ENCODE measurements at regions of chr2 and their contacts with region 1.

Region 1: GRCh38 chr2:48946449-48947048 is 191.0 kb upstream of the LHCGR start:
- DNase-seq: peak; percentile 21
- H3K4me3 ChIP-seq: no peak overlapping the region
- H3K27ac ChIP-seq: no peak overlapping the region
- H3K27me3 ChIP-seq: no peaks in the 10 kb centered on the region
- CTCF ChIP-seq: peak; percentile 81

Region 2: DNA sequence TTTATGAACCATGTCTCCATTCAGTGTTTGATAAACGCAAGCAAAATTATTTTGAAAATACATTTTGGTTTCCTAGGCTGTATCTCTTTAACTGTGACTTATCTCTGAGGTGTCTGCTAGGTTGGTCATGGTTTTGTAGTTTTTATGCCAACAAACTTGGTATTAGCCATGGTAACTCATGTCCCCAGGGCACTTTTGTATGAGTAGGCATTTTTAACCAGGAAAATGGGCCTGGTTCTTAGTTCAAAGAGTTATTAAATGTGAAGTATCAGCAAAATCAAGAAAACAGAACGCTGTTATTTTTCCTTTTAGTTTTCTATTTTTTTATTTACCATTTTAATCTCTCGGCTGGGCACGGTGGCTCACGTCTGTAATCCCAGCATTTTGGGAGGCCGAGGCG is 11.7 kb before region 1 on chr2:
- CTCF ChIA-PET with region 1: interaction called, 16 read pairs
- POLR2A ChIA-PET with region 1: no interaction called
- DNase-seq: no peak
- H3K4me3 ChIP-seq: no peak overlapping the region
- H3K27ac ChIP-seq: no peak overlapping the region
- H3K27me3 ChIP-seq: peaks cover 3% of the 10 kb centered on the region
- CTCF ChIP-seq: no peak

Region 3: DNA sequence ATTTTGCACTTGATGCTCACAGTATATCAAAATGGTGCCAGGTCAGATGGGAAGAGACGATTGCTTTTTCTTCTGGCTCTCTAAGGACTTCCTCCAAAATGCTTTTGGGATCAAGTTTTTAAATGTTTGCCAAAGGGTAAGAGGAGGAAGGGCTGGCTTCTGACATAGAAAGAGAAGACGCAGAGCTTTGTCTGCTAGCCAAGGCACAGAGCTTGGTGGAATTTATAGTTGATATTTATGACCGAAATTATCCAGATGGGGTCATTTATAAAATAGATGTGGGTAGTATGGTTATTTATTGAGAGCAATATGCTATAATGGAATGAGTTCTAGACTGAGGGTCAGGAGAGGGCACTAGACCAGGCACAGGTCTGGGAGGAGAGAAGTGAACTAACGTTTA is 14.5 kb after region 1 on chr2:
- CTCF ChIA-PET with region 1: interaction called, 12 read pairs
- POLR2A ChIA-PET with region 1: no interaction called
- DNase-seq: no peak
- H3K4me3 ChIP-seq: no peak overlapping the region
- H3K27ac ChIP-seq: no peak overlapping the region
- H3K27me3 ChIP-seq: peaks cover 3% of the 10 kb centered on the region
- CTCF ChIP-seq: no peak

Region 4: DNA sequence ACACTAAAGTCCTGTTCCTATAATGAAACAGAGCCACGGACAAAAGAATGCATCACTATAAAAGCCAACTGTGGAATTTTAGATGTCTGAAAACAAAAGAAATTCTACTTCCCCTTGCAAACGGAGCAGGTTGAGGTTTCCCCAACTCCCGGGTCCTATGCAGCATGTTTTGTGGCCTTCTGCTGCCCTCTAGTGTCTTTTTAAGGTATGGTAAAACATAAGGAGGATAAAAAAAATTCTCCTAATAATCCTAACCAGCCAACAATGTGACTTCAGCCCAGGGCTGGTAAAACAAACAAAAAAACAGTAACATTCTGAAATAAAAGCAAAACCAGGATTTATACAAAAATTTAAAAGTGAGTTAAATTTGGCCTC is 1545.9 kb after region 1 on chr2:
- CTCF ChIA-PET with region 1: interaction called, 10 read pairs
- POLR2A ChIA-PET with region 1: no interaction called
- DNase-seq: peak; percentile 16
- H3K4me3 ChIP-seq: no peak overlapping the region
- H3K27ac ChIP-seq: no peak overlapping the region
- H3K27me3 ChIP-seq: no peaks in the 10 kb centered on the region
- CTCF ChIP-seq: peak; percentile 80